ENCODE measurements at regions of chr13 and their contacts with region 1.

Region 1: DNA sequence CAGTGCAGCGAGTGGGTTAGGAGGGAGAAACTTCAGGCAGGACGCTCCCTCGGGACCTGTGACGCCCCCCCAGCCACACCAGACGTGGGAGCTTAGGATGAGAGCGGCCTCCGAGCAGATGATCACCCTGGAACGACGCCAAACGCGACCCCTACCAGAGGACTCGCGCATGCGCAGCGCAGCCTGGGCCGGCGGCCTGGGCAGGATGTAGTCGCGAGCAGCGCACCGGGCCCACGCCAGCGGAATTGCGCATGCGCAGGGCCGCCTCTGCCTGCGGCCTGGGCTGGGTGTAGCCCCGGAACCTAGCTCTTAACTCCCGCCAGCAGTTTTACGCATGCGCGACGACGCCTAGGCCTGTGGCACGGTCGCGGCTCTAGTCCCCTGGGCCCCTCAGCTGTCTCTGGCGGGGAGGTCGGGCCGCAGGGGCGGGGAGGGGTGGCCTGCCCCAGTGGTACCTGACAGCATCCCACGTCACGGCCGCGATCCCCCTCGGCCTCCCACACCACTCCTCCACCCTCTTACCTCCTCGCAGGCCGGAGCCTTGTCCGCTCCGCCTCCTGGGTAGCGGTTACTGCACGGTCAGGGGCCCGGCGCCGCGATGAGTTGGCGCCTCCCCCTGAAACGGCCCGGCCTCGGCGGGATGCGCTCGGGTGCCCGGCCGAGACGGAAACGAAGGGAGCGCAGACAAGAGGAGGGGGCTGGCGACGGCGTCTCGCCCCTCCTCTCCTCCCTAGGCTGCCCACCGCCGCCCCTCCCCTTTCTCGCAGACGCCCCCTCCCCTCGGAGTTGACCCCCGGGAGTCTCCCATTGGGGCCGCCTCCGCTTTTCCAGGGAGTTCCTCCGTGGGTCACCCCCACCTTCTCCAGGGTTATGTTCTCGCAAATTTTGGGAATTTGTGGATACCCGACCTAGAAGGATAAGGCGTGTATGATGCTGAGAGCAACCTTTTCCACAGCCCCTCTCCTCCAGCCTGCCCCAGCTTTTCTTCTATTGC is at the start of gene RCBTB2:
- DNase-seq: peak; percentile 100
- ATAC-seq: peak; percentile 94
- H3K4me3 Mint-ChIP-seq: peak within 1 kb of the TSS; percentile 93
- H3K27ac Mint-ChIP-seq: peak within 1 kb of the TSS; percentile 98
- H3K4me1 Mint-ChIP-seq: peaks cover 33% of the 10 kb centered on the region
- H3K27me3 Mint-ChIP-seq: peaks cover 2% of the 10 kb centered on the region
- total RNA-seq, gene RCBTB2: 18.3 to 21.5 TPM

Region 2: DNA sequence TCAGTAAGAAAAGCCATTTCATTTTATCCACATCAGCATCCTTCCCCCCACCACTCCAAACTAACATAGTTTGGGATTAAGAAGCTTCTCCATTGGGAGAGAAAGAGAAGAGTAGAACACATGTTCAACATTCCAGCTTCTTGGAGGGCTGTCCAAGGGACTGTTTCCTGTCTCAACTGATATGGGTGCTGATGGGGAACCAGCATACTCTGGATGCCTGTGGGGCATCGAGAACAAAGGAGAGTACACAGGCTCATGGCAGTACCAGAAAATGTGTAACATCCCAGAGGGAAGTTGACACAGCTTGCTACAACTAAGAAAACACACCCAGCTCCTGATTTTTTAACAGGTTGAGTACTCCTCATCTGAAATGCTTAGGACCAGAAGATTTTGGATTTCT is 556.5 kb before region 1 on chr13:
- POLR2A ChIA-PET with region 1: no interaction called
- DNase-seq: no peak
- ATAC-seq: no peak
- H3K4me3 Mint-ChIP-seq: no peak overlapping the region
- H3K27ac Mint-ChIP-seq: no peak overlapping the region
- H3K4me1 Mint-ChIP-seq: peaks cover 2% of the 10 kb centered on the region
- H3K27me3 Mint-ChIP-seq: no peaks in the 10 kb centered on the region

Region 3: DNA sequence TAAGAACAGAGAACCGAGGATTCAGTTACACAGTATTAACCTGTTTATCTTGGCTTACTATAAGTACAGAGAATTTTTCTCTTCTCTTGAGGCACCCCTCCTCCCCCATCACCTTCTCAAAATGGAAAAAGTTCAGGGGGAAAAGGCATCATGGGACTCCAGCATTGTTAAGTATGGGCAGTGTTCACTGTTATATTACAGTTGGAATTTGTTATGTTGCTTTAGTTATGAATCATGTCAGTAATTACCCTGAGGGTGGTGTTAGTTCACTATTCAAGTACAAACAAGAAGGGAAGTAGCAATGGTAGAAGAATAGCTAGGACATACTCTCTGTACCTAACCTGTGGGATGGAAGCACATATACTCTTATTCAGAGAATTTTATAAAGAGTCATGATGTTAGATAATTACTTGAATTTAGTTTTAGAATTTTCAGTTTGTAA is 131.9 kb before region 1 on chr13:
- POLR2A ChIA-PET with region 1: interaction called, 14 read pairs
- DNase-seq: no peak
- ATAC-seq: peak; percentile 66
- H3K4me3 Mint-ChIP-seq: peak overlapping the region; percentile 69
- H3K27ac Mint-ChIP-seq: peak overlapping the region; percentile 74
- H3K4me1 Mint-ChIP-seq: peaks cover 40% of the 10 kb centered on the region
- H3K27me3 Mint-ChIP-seq: no peaks in the 10 kb centered on the region

Region 4: GRCh38 chr13:48492470-48493065 is 40.2 kb before region 1 on chr13:
- POLR2A ChIA-PET with region 1: interaction called, 24 read pairs
- DNase-seq: peak; percentile 70
- ATAC-seq: peak; percentile 85
- H3K4me3 Mint-ChIP-seq: no peak overlapping the region
- H3K27ac Mint-ChIP-seq: no peak overlapping the region
- H3K4me1 Mint-ChIP-seq: peaks cover 43% of the 10 kb centered on the region
- H3K27me3 Mint-ChIP-seq: no peaks in the 10 kb centered on the region

Region 5: DNA sequence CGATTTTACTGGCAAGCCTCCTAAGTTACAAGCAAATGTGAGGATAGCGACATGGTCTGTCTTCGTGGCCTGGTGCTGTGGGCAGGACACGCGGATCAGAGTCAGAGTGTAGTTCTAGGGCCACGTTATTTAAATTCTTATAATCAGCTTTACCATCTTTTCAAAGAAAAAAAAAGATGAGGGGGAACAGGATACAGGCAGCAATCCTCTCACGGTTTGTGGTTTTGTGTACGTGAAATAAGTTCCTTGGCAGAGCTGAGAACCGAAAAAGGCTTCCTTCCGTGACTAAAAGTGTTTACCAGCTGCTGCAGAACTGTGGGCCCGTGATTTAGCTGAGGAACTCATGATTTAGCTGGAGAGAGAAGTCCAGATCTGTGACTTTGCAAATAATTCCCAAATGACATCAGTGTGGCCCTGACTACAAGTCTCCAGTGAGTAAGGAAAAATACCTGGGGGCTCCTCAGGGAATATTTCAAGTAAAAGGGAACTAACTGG is 27.2 kb before region 1 on chr13:
- POLR2A ChIA-PET with region 1: interaction called, 31 read pairs
- DNase-seq: peak; percentile 54
- ATAC-seq: peak; percentile 88
- H3K4me3 Mint-ChIP-seq: peak overlapping the region; percentile 67
- H3K27ac Mint-ChIP-seq: peak overlapping the region; percentile 92
- H3K4me1 Mint-ChIP-seq: peaks cover 62% of the 10 kb centered on the region
- H3K27me3 Mint-ChIP-seq: no peaks in the 10 kb centered on the region

Region 6: GRCh38 chr13:48562296-48563066 is 29.7 kb after region 1 on chr13:
- POLR2A ChIA-PET with region 1: interaction called, 40 read pairs
- DNase-seq: no peak
- ATAC-seq: peak; percentile 87
- H3K4me3 Mint-ChIP-seq: peak overlapping the region; percentile 79
- H3K27ac Mint-ChIP-seq: peak overlapping the region; percentile 74
- H3K4me1 Mint-ChIP-seq: peaks cover 53% of the 10 kb centered on the region
- H3K27me3 Mint-ChIP-seq: peaks cover 49% of the 10 kb centered on the region

Region 7: DNA sequence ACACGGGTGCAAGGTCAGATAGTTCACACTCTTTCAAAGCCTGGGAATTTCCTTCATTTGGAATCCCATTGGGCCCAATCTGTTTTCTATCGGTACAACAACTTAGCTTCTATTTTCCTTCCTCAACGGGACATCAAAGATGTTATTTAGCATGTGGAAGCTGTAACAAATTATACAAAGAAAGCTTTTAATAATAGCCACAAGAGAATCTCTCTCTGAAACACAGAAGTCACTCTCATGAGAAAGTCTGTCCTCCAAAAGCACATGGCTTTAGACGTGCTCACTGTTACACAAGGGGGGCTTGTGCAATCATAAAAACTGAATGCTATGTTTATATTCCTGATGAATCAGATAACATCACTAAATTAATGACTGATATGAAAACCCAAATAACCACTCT is 92.1 kb after region 1 on chr13:
- POLR2A ChIA-PET with region 1: no interaction called
- DNase-seq: no peak
- ATAC-seq: no peak
- H3K4me3 Mint-ChIP-seq: no peak overlapping the region
- H3K27ac Mint-ChIP-seq: no peak overlapping the region
- H3K4me1 Mint-ChIP-seq: no peaks in the 10 kb centered on the region
- H3K27me3 Mint-ChIP-seq: peaks cover 3% of the 10 kb centered on the region